ENCODE measurements at regions of chr6 and their contacts with region 1.

Region 1: DNA sequence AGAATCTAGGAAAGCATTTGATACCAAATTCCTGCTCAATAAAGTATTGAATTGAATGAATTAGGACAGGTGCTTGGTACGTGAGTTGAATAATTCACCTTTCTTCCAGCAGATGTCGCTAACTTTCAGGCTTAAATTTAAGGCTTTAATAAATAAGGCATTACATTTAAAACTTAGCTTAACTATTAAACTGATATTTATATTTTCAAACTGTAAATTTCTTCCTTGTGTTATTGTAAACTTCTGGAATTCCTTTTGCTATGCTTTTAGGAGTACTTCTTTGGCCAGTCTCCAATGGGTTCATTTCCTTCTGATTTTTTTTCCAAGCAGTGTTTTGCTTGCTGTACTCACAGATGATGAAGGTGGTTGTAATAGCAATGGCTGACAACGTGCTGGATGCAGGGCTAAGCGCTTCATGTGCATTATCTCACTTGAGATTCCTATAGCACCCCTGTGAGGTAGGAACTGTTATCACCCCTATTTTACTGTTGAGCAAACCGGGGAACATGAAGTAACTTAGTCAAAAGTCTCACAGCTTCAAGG is 71.3 kb upstream of the SLC2A12 start:
- DNase-seq: peak; percentile 35
- H3K27ac ChIP-seq: no peak overlapping the region
- CTCF ChIP-seq: peak; percentile 80

Region 2: DNA sequence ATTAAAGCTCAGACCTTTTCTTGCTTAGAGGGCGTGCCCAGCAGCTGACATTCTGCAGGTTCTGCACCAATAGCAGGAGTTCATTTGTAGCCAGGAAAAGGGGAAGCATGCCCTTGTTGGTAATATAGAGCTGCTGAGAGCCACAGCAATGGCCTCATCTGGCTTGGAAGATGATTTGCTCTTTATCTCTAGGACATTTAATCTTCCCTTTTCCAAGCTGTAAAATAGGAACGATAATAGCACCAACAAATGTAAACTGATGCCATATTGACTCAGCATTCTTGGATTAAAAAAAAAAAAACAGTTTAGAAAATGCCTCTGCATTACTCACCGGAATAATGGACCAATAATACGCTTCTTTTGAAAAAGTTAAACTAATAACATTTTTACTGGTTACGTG is 22.0 kb after region 1 on chr6:
- CTCF ChIA-PET with region 1: interaction called, 11 read pairs
- POLR2A ChIA-PET with region 1: no interaction called
- DNase-seq: no peak
- H3K27ac ChIP-seq: no peak overlapping the region
- CTCF ChIP-seq: no peak

Region 3: DNA sequence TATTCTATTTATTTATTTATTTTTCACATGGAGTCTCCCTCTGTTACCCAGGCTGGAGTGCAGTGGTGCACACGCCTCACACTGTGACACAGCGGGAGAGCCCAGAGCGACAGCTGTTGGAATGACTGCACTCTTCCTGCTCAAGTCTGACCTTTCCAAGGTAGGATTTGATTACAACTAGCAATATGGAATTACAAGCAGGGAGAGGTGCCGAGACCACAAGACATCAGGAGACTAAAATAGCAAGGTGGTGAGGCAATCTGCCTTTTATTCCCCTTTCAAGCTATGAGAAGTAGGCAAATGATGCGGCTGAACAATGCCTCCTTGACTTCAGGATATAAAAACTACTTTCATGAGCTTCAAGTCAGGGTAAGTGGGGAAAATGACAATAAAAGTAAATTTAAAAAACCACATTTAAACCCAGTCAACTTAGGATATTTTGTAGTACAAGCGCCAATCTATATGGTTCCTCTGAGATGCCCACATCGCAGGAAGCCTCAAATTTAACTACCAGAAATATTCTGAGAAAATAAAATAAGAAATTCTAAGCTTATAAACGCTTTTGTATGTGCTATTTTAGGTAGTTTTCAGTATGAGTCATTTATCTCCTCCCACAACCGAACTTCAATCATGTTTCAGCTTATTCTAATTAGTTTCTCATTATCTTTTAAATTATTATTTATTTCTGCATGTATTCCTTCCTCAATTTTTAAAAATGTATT is 341.1 kb after region 1 on chr6:
- CTCF ChIA-PET with region 1: interaction called, 11 read pairs
- POLR2A ChIA-PET with region 1: no interaction called
- DNase-seq: peak; percentile 63
- H3K27ac ChIP-seq: peak overlapping the region; percentile 70
- CTCF ChIP-seq: no peak